Activated CD4-positive, alpha-beta memory T cell treated with anti-CD3 and anti-CD28 coated beads for 36 hours (primary cell): ENCODE measurements at regions of chr14 and their contacts with region 1.

Region 1: DNA sequence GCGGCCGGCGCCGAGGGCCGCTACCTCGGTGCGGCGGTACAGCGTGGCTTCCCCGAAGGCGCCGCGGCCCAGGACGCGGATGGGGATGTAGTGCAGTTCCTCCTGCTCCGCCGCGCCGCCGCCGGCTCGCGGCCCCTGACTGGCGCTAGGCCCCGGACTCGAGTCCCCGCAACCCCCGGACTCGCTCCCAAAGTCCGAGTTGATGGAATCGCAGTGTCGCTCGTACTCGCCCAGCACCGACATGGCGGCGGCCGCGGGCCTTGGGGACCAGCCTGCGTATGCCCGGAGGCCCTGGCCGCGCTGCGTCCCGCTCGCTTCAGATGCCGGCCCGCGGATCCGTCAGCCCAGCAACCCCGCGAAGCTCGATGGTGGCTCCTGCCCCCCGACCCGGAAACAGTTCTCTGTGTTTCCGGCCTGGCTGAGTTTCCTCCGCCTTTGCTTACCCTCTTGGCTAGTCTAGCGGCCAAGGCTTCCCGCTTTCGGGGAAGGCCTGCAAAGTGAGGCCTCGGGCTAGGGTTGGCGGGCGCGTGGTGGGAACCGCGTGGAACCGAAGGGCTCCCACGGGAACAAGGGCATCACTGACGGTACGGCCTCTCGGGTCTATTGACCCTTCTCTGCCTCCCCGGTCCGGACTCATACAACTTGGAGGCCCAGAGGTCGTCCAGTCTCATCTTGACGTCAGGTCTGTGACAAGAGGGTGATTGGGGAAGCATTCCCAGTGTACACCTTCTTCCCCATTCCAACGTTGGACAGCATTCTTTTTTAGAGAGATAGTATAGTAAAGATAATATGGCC is at the start of gene NEK9:
- DNase-seq: peak; percentile 94
- H3K4me3 Mint-ChIP-seq: peak within 1 kb of the TSS; percentile 99
- H3K27ac Mint-ChIP-seq: peak within 1 kb of the TSS; percentile 96
- H3K4me1 Mint-ChIP-seq: peaks cover 43% of the 10 kb centered on the region
- H3K27me3 Mint-ChIP-seq: no peaks in the 10 kb centered on the region
- total RNA-seq, gene NEK9: 51.8 to 56.4 TPM

Region 2: GRCh38 chr14:74784634-74785033 is 342.2 kb before region 1 on chr14:
- CTCF ChIA-PET with region 1: no interaction called
- POLR2A ChIA-PET with region 1: no interaction called
- intact Hi-C with region 1: no loop called
- DNase-seq: no peak
- H3K4me3 Mint-ChIP-seq: no peak overlapping the region
- H3K27ac Mint-ChIP-seq: peak overlapping the region; percentile 16
- H3K4me1 Mint-ChIP-seq: peaks cover 11% of the 10 kb centered on the region
- H3K27me3 Mint-ChIP-seq: no peaks in the 10 kb centered on the region

Region 3: DNA sequence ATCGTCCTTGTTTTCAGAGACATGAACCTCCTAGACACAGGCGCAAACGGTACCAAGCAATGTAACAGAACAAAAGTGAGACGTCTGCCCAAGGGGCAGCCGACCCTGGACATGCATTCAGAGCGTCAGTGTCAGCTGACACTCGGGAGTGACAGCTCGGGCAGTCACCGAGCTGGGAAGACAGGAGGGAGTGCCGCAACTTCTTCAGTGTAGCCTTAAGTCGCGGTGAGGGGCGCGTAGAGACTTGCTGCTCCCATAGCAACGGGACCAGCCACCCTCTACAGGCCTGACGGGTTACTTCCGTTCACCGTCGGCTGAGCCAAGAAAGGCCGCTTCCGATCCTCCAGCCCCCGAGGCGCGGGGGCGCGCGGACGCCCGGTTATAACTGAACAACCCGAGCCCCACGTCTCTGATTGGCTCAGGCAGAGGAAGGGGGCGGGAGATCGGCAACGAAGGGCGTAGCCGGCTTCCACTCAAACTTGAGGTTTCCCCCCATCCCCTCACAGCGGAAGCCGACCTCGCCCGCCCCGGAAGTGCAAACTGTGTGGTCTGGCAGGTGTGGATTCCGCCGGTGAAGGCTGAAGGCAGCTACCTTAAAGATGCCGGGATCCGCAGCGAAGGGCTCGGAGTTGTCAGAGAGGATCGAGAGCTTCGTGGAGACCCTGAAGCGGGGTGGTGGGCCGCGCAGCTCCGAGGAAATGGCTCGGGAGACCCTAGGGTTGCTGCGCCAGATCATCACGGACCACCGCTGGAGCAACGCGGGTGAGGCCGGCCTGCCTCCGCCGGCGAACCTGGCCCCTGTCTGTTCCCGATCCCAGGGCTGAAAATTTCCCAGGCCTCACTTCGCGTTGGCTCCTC is 124.3 kb before region 1 on chr14 and contains the start of gene EIF2B2:
- CTCF ChIA-PET with region 1: no interaction called
- POLR2A ChIA-PET with region 1: no interaction called
- intact Hi-C with region 1: loop called (anchors 1 kb)
- DNase-seq: peak; percentile 100
- H3K4me3 Mint-ChIP-seq: peak within 1 kb of the TSS; percentile 98
- H3K27ac Mint-ChIP-seq: peak within 1 kb of the TSS; percentile 79
- H3K4me1 Mint-ChIP-seq: peaks cover 34% of the 10 kb centered on the region
- H3K27me3 Mint-ChIP-seq: no peaks in the 10 kb centered on the region
- total RNA-seq, gene EIF2B2: 61.9 to 62.6 TPM

Region 4: DNA sequence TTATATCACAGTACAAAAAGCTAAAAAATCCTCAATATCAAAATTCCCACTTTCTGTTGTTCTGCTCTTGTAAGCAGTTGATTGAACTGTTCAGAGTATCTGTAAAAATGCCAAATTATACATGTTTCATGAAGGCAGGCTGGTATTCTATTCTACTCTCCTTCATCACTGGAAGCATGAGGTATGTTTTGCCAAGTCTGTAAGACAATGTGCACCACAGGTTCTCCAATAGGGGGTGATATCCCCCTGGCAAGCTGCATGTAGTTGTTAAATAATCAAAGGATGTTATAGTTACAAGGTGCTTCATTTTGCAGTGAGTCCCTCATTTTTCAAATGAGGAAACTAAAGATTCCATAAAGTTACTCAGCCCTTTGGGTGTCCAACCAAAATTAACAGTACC is 15.1 kb after region 1 on chr14:
- CTCF ChIA-PET with region 1: interaction called, 6 read pairs
- POLR2A ChIA-PET with region 1: interaction called, 4 read pairs
- intact Hi-C with region 1: loop called (anchors 1 kb)
- DNase-seq: no peak
- H3K4me3 Mint-ChIP-seq: no peak overlapping the region
- H3K27ac Mint-ChIP-seq: no peak overlapping the region
- H3K4me1 Mint-ChIP-seq: peaks cover 58% of the 10 kb centered on the region
- H3K27me3 Mint-ChIP-seq: no peaks in the 10 kb centered on the region

Region 5: DNA sequence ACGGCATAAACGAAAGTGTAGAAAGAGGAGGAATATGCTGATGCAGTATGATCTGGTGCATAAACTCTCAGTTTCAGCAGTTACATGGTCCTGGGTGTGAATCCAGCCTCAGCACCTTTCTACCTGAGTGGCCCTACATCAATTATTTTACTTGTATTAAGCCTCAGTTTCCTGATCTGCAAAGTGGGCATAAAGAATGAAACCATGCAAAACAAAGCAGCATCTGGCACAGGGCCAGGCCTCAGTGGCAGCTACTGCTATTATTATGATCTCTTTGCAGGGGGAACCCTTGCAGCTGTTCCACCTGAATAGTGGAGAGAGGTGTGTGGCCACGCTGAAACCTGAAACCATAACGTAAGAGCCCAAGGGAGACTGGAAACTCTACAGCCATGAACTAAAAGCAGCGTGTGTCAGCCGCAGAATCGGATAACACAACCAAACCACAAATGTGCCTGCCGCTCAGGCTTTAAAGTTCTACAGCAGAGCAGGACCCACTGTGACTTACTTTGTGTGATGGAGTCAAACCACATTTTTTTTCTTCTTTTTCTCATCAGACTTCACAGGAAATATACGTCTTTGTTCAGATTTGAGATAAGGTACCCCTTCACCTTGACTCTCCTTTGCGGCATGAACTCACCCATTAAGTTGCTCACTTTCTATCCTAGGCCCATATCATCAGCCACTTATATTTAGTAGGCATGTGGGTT is 122.5 kb after region 1 on chr14:
- CTCF ChIA-PET with region 1: no interaction called
- POLR2A ChIA-PET with region 1: interaction called, 9 read pairs
- intact Hi-C with region 1: loop called (anchors 2 kb)
- DNase-seq: peak; percentile 93
- H3K4me3 Mint-ChIP-seq: peak overlapping the region; percentile 33
- H3K27ac Mint-ChIP-seq: peak overlapping the region; percentile 64
- H3K4me1 Mint-ChIP-seq: peaks cover 55% of the 10 kb centered on the region
- H3K27me3 Mint-ChIP-seq: peaks cover 4% of the 10 kb centered on the region

Region 6: GRCh38 chr14:75487155-75487671 is 360.3 kb after region 1 on chr14:
- CTCF ChIA-PET with region 1: interaction called, 5 read pairs
- POLR2A ChIA-PET with region 1: no interaction called
- intact Hi-C with region 1: loop called (anchors 5 kb)
- DNase-seq: peak; percentile 25
- H3K4me3 Mint-ChIP-seq: no peak overlapping the region
- H3K27ac Mint-ChIP-seq: peak overlapping the region; percentile 62
- H3K4me1 Mint-ChIP-seq: peaks cover 22% of the 10 kb centered on the region
- H3K27me3 Mint-ChIP-seq: peaks cover 2% of the 10 kb centered on the region

Region 7: DNA sequence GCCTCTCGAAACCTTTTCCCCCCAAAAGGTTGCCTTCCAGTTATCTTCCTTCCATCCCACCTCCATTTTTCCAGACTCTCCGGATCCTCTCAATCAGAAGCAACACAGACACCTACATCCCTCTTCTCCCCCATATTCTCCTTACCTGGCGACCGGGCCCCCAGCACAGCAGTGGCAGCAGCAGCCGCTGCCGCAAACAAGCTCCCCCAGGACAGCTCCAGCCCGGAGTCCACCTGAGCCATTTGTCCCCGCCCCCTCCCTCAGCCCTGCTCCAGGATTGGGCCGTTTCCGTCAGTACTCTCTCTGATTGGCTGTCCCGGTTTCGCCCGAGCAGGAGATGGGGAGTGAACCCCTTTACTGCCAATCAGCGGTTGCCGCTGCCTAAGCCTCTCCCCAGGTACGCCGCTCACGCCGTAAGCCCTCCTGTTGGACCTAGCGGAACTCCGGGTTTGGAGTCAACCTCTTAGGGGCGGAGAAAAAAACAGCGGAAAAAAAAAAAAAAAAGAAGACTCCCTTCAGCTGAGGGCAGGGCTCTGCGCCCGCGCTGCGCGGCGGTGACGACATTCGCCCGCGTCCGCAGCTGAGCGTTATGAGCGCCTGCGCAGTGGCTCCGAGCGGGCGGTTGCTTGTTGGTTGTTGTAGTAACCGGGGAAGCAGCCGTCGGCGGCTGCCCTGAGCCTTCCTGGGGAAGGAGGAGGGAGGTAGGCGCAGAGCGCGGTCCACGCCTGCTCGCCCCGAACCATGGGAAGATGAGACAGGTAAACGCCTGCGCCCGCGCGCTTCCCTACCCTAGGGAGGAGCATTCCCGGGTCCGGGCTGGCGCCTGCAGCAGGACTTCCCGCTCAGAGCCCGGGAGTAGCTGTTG is 534.0 kb after region 1 on chr14 and contains the starts of genes ERG28 and TTLL5:
- CTCF ChIA-PET with region 1: no interaction called
- POLR2A ChIA-PET with region 1: no interaction called
- intact Hi-C with region 1: loop called (anchors 5 kb)
- DNase-seq: peak; percentile 98
- H3K4me3 Mint-ChIP-seq: peak within 1 kb of the TSS; percentile 96
- H3K27ac Mint-ChIP-seq: peak within 1 kb of the TSS; percentile 90
- H3K4me1 Mint-ChIP-seq: peaks cover 34% of the 10 kb centered on the region
- H3K27me3 Mint-ChIP-seq: no peaks in the 10 kb centered on the region
- total RNA-seq, gene ERG28: 25.9 to 26.8 TPM
- total RNA-seq, gene TTLL5: 23.6 to 28.4 TPM